ENCODE measurements at regions of chr14 and their contacts with region 1.

Region 1: GRCh38 chr14:61452452-61452851 is 131.1 kb downstream of the PRKCH start:
- DNase-seq: peak in 8 of 10 donors; percentile 37 to 77 (median 63)
- ATAC-seq: peak; percentile 85 to 88
- H3K4me3 Mint-ChIP-seq: peak overlapping the region; percentile 66 to 85 (median 78)
- H3K27ac Mint-ChIP-seq: peak overlapping the region; percentile 87 to 97 (median 94)
- H3K4me1 Mint-ChIP-seq: peaks cover 57 to 100% (median 97%) of the 10 kb centered on the region in 4 donors
- H3K27me3 Mint-ChIP-seq: no peaks in the 10 kb centered on the region

Region 2: DNA sequence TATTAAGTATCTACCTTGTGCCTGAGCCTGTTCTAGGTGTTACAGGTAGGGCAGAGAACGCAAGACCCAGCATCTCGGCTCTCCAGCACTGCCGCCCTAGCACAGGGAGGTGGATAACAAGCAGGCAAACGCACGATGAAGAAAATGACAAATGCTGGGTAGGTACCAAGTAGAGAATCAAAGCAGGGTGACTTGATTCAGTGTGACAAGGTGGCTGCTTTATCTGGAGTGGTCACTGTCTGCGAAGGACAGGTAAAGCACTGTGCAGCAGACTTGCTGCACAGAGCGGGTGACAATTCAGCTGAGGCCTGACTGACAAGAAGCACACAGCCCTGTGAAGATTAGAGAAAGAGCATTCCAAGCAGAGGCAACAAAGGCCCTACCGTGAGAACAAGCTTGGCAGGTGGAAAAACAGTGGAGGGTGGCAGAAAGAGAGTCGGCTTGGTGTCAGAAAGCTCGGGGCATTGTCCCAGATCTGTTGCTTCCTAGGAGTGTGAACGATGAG is 118.2 kb before region 1 on chr14:
- POLR2A ChIA-PET with region 1: interaction called, 12 read pairs
- DNase-seq: peak in 5 of 10 donors; percentile 27 to 72 (median 52)
- ATAC-seq: peak in 1 of 2 donors; percentile 15
- H3K4me3 Mint-ChIP-seq: peak overlapping the region; percentile 77 to 93 (median 89)
- H3K27ac Mint-ChIP-seq: peak overlapping the region in 9 of 10 donors; percentile 96 to 100 (median 99)
- H3K4me1 Mint-ChIP-seq: peaks cover 48 to 93% (median 87%) of the 10 kb centered on the region in 4 donors
- H3K27me3 Mint-ChIP-seq: no peaks in the 10 kb centered on the region

Measured in naive thymus-derived CD8-positive, alpha-beta T cell (primary cell).